ENCODE measurements at regions of chr3 and their contacts with region 1.

Region 1: DNA sequence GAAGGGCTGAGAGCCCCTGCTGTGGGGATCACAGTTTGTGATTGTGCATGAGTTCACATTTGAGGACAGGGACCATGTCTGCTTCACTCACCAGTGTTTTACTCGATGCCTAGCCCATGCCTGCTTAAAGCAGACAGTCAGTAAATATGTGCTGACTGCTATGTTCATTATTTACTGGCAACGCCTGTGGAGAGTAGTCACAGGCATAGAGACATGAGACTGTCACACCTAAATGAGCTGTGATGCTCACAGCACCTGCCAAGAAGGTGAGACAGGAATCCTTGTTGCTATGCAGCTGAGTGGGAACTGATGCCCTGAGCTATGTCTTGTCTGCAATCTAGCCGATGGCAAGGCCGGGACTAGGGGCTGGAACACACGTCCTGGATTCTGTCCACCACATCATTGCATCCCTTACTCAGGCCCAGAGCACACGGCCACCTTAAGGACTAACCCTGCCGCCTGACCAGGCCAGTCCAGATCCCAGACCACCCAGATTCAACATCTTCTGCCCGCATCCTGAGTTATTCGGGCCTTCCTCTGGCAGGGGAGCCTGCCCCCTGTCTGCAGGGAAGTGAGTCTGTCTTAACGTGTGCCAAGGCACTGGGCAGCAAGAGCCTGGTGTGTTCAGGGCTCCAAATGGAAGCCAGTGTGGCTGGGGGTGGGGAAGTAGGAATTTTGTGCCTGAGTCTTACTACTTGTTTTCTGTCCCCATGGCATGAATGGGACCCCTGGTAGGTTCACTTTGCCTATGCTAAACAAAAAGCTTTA is 44.8 kb downstream of the FGD5 start:
- DNase-seq: peak in 1 of 2 experiments; percentile 21
- H3K4me3 ChIP-seq: no peak overlapping the region
- H3K27ac ChIP-seq: no peak overlapping the region
- H3K4me1 ChIP-seq: peaks cover 4 to 16% (median 13%) of the 10 kb centered on the region in 4 experiments
- H3K27me3 ChIP-seq: no peaks in the 10 kb centered on the region
- CTCF ChIP-seq: peak; percentile 65 to 82 (median 80)
- EP300 ChIP-seq: no peak
- POLR2A ChIP-seq: no peak
- RAD21 ChIP-seq: peak; percentile 51 to 63

Region 2: DNA sequence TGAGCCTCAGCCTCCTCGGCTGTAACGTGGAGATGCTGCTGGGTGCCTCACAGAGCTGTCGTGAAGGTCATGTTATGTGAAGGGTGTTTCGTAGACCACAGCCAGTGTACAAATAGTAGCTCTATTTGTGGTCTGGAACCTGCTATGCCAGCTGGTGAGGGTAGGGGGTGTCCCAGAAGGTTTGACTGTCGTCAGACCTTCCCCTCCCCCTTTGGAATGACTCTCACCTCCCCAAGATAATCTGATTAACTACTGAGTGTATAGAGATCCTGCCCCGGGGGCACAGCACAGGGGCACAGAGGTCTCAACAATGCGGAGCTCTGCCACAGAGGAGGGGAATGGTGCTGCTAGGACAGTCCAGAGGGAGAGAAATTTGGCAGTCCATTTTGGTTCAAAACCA is 24.3 kb before region 1 on chr3:
- CTCF ChIA-PET with region 1: interaction called, 12 read pairs
- POLR2A ChIA-PET with region 1: no interaction called
- DNase-seq: no peak
- H3K4me3 ChIP-seq: no peak overlapping the region; a peak in 1 of 8 replicates
- H3K27ac ChIP-seq: no peak overlapping the region
- H3K4me1 ChIP-seq: peaks cover 1 to 11% (median 6%) of the 10 kb centered on the region in 4 experiments; a peak in 3 of 7 replicates
- H3K27me3 ChIP-seq: no peaks in the 10 kb centered on the region
- CTCF ChIP-seq: peak in 1 of 3 experiments; percentile 33; a peak in 1 of 4 replicates
- EP300 ChIP-seq: no peak
- POLR2A ChIP-seq: no peak
- RAD21 ChIP-seq: peak in 1 of 2 experiments; percentile 27; a peak in 1 of 4 replicates

Region 3: DNA sequence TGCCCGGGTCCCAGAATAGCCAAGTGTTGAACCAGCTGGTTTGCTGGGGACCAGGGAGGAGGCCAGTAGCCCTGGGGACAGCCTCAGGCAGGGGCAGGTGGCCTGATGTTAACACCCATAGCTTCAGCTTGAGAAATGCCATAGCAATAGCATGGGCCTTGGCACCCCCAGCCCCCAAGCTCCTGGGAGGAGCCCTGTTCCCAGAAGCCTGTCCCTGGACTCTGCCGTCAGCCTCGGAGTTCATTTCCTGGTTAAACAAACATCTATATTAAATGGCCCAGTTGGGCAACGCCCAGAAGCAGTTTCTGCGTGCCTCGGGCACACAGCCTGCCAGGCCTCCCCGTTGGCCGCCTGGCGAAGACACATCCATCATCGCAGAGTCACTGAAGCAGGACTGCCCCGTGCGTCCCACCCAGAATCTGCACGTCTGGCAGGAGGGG is 13.4 kb after region 1 on chr3:
- CTCF ChIA-PET with region 1: interaction called, 50 read pairs
- POLR2A ChIA-PET with region 1: interaction called, 3 read pairs
- DNase-seq: no peak
- H3K4me3 ChIP-seq: no peak overlapping the region
- H3K27ac ChIP-seq: no peak overlapping the region
- H3K4me1 ChIP-seq: peaks cover 0 to 21% (median 12%) of the 10 kb centered on the region in 4 experiments; a peak in 6 of 7 replicates
- H3K27me3 ChIP-seq: no peaks in the 10 kb centered on the region
- CTCF ChIP-seq: no peak
- EP300 ChIP-seq: no peak
- POLR2A ChIP-seq: no peak
- RAD21 ChIP-seq: no peak

Region 4: DNA sequence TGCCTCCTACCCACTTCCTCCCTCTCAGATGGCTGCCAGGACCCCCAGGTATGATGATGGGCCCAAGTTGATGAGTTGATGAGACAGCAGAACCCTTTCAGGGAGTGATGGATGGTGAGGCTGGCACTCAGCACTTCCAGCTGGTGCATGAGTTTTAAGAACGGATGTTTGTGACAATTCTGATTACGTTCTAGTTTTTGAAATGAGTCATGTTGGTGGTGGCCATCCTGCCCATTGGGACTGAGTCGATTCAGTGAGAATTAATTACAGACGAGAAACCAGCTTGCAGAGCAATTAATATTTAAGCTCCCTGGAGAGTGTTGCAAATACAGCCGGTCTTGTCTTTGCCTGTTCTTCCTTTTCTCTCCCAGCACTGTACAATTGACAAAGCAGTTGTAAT is 27.0 kb after region 1 on chr3:
- CTCF ChIA-PET with region 1: interaction called, 21 read pairs
- POLR2A ChIA-PET with region 1: interaction called, 3 read pairs
- DNase-seq: no peak
- H3K4me3 ChIP-seq: no peak overlapping the region
- H3K27ac ChIP-seq: no peak overlapping the region
- H3K4me1 ChIP-seq: no peaks in the 10 kb centered on the region
- H3K27me3 ChIP-seq: no peaks in the 10 kb centered on the region
- CTCF ChIP-seq: no peak
- EP300 ChIP-seq: no peak
- POLR2A ChIP-seq: no peak
- RAD21 ChIP-seq: no peak

Region 5: GRCh38 chr3:14915636-14916222 is 52.2 kb after region 1 on chr3:
- CTCF ChIA-PET with region 1: interaction called, 54 read pairs
- POLR2A ChIA-PET with region 1: no interaction called
- DNase-seq: no peak
- H3K4me3 ChIP-seq: no peak overlapping the region
- H3K27ac ChIP-seq: no peak overlapping the region
- H3K4me1 ChIP-seq: no peaks in the 10 kb centered on the region; a peak in 2 of 7 replicates
- H3K27me3 ChIP-seq: no peaks in the 10 kb centered on the region
- CTCF ChIP-seq: peak in 2 of 3 experiments; percentile 46 to 52; a peak in 3 of 4 replicates
- EP300 ChIP-seq: no peak
- POLR2A ChIP-seq: no peak
- RAD21 ChIP-seq: peak; percentile 65 to 74

Region 6: DNA sequence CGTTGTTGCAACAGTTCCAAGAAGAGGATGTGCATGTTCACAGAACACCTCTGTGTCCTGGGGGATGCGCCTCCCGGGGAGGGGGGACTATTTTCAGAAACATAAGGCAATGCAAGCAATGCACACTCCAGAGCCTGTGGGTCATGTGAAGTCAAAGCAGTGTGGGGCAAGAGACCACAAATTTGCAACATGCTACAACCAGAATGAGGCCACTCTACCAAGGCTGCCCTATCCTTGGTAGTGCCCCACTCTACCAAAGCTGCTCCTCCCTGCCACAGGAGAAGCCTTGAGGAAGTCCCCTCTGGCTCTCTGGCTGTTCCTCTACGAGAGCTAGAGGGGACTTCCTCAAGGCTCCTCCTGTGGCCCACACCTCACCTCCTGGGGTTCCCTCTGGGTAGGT is 75.4 kb after region 1 on chr3:
- CTCF ChIA-PET with region 1: no interaction called
- POLR2A ChIA-PET with region 1: no interaction called
- DNase-seq: no peak
- H3K4me3 ChIP-seq: no peak overlapping the region
- H3K27ac ChIP-seq: no peak overlapping the region
- H3K4me1 ChIP-seq: 0 out of 7 replicates have a peak, but pooled peaks cover 0 to 3% (median 1%) of the 10 kb centered on the region in 4 experiments
- H3K27me3 ChIP-seq: no peaks in the 10 kb centered on the region
- CTCF ChIP-seq: no peak
- EP300 ChIP-seq: no peak
- POLR2A ChIP-seq: no peak
- RAD21 ChIP-seq: no peak

Region 7: DNA sequence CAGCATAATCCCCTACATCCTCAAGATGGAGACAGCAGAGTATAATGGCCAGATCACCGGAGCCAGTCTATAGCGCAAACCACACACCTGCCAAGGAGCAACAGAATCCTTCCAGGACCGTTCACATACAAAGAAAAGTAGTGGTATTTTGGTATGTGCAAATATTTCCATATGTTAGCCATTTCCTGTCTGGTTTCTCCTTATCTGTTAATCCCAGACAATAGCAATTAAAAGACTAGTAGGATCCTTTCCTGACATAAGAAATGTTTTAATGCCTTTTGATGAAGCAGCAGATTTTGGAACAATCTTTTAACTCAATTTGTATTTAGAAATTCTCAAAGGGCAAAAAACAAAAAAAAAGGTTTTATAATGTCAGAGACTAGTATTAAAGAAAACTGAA is 179.4 kb after region 1 on chr3:
- CTCF ChIA-PET with region 1: no interaction called
- POLR2A ChIA-PET with region 1: no interaction called
- DNase-seq: no peak
- H3K4me3 ChIP-seq: no peak overlapping the region
- H3K27ac ChIP-seq: no peak overlapping the region
- H3K4me1 ChIP-seq: no peaks in the 10 kb centered on the region
- H3K27me3 ChIP-seq: no peaks in the 10 kb centered on the region
- CTCF ChIP-seq: no peak
- EP300 ChIP-seq: no peak
- POLR2A ChIP-seq: no peak
- RAD21 ChIP-seq: no peak

Measured in H1 (cell line).